Activated T-helper 1 cell treated with anti-CD3 and anti-CD28 coated beads, Interleukin-12 subunit alpha, Interleukin-12 subunit beta, Interleukin-2, Interleukin-4 antibody, amounts not matched to agents 30 ng/mL and 10 ng/mL and 1 ng/mL, durations not matched to agents 14 hours and 24 hours and 36 hours (primary cell): ENCODE measurements at regions of chr9 and their contacts with region 1.

Region 1: DNA sequence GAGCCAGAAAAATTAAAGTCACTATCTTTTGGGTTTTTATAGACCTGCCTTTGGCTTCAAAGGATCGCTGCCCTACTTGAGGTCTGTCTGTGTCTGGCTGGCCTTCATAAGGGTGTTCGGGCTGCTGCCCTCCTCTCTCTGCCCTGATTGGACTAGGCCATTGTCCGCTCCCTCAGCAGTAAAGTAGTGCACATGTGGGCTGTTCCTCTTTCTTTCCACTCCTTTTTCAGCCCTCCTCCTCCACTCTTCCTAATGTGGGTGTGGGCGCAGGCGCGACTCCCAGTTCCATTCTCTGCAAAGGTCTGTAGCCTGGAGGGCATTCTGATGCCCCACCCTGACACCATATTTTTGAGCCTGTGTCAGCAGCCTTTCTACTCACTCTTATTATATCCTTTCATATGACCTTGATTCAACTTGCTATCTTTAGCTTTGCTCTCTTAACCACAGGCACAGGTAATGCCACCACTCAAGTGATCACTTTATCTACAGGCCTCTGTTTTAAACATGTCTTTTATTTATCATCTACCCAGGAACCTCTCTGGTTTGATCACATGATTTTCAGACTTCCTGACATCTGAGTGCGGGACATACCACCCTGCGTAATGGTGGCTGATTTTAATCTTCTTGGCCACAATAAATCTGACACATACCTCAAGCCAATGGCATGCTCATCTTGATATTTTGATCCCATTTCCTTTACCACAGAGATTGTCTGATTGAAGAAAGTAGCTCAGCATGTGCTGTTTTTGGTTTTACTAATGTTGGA is 144.5 kb downstream of the AOPEP start:
- DNase-seq: no peak
- H3K4me3 Mint-ChIP-seq: no peak overlapping the region
- H3K27ac Mint-ChIP-seq: peak overlapping the region; percentile 75
- H3K4me1 Mint-ChIP-seq: peaks cover 58% of the 10 kb centered on the region
- H3K27me3 Mint-ChIP-seq: peaks cover 4% of the 10 kb centered on the region

Region 2: GRCh38 chr9:94108584-94108983 is 762.4 kb before region 1 on chr9:
- intact Hi-C with region 1: no loop called
- DNase-seq: no peak
- H3K4me3 Mint-ChIP-seq: no peak overlapping the region
- H3K27ac Mint-ChIP-seq: no peak overlapping the region
- H3K4me1 Mint-ChIP-seq: peaks cover 4% of the 10 kb centered on the region
- H3K27me3 Mint-ChIP-seq: no peaks in the 10 kb centered on the region

Region 3: DNA sequence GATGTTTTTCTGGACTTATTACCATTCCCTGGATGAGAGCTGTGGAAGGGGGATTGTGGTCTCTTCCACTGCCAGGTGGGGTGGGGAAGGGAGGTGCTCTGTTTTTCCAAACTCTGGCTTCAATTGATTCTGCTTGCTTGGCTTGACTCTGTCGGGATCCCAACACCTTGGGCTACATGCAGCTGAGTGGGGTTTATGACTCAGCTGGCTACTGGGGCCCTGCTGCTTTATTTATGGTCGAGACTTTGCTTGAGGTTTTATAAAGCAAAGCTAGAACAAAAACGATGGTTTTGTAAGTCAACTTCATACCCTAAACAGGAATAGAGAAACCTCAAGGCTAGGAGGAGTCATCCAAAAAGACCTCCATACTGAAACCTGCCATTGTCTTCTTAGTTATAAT is 68.2 kb before region 1 on chr9:
- intact Hi-C with region 1: loop called (anchors 1 kb)
- DNase-seq: peak; percentile 4
- H3K4me3 Mint-ChIP-seq: peak overlapping the region; percentile 28
- H3K27ac Mint-ChIP-seq: peak overlapping the region; percentile 66
- H3K4me1 Mint-ChIP-seq: peaks cover 40% of the 10 kb centered on the region
- H3K27me3 Mint-ChIP-seq: no peaks in the 10 kb centered on the region

Region 4: GRCh38 chr9:94952565-94953373 is 81.8 kb after region 1 on chr9:
- intact Hi-C with region 1: loop called (anchors 5 kb)
- DNase-seq: peak; percentile 11
- H3K4me3 Mint-ChIP-seq: peak overlapping the region; percentile 66
- H3K27ac Mint-ChIP-seq: peak overlapping the region; percentile 79
- H3K4me1 Mint-ChIP-seq: peaks cover 45% of the 10 kb centered on the region
- H3K27me3 Mint-ChIP-seq: peaks cover 1% of the 10 kb centered on the region